GM18951 (cell line): ENCODE measurements at regions of chr2 and their contacts with region 1.

Region 1: DNA sequence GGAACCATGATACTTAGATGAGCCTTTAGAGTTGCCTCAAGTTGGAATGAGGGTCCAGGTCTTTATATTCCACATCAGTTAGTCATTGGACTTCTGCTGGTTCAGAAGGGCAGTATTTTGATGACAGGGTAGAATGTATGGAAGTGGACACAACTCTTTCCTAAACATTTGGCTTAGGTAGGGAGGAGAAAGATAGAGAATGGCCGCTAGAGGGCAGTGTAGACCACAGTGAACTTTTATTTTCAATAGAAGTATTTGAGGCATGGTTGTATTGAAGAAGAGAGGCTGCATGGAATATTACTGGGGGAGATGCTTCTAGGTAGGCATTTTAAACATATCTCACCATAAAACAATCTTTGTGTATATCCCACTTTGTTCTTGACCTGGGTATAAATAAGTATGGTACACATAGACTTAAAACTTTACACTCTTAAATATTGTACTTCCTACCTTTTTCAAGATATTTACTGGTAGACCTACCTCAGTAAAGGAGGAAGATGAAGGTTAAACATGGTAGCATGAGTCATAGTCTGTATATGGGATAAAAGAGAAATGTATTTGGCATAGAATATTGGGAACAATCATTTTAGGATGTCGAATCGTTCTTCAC is 497.6 kb upstream of the FAM98A start:
- POLR2A ChIP-seq: no peak

Region 2: DNA sequence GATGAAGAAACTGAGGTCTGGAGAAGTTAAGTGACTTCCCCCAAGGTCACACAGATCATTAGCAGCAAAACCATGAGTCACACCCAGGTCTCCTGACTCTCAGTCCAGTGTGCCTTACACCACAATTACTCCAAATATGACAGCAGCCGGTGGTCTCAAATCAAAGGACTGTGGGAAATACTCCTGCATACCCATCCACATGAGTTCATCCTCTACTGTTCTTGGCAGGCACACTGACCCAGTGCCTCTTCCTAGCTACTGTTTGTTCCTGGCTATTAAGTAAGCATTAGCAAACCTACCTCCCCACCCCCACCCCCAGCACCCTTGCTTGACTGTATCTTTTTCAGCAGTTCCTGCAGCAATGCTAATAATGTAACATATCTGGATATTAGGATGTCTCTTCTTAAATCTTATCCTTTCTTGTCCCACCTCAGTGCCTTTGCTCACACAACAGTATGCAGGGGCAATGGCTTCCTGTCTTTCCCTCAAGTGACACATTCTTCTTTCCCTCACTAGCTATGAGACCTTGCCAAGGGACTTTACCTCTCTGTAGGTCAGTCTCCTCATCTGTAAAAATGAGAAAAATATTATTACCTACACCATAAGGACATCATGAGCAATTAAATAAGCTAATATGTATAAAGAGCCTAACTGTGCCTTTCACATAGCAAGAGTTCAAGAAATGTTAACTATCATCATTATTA is 543.8 kb before region 1 on chr2:
- in situ Hi-C with region 1: no loop called
- POLR2A ChIP-seq: no peak

Region 3: DNA sequence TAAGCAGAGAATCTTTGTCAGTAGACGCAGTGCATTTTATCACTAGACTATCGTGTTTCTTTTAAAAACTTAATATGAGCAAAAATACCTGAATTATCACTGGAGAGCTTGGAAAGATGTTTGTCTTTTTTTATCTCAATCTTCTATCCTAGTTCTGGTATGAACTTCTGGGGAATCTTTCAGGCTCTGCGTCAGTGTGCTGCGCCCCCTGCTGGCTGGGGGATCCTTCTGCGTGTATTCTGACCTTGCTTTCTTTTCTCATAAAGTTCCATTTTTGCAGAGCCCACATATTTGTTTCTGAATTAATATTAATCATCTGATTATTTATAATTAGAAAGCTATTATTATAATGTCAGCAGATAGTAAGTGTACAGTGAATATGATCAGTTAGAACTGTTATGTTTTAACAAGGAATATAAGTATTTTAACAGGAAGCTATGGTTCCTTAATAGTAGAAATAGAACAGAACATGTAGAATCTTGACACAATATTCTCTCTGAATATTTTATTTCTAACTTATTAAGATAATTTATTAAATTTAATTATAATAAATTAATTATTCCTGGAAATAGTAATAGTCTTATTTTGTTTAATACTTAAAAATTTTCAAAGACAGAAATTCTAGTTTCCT is 1313.9 kb after region 1 on chr2:
- in situ Hi-C with region 1: loop called (anchors 25 kb)
- POLR2A ChIP-seq: no peak